ENCODE measurements at regions of chr13 and their contacts with region 1.

Region 1: DNA sequence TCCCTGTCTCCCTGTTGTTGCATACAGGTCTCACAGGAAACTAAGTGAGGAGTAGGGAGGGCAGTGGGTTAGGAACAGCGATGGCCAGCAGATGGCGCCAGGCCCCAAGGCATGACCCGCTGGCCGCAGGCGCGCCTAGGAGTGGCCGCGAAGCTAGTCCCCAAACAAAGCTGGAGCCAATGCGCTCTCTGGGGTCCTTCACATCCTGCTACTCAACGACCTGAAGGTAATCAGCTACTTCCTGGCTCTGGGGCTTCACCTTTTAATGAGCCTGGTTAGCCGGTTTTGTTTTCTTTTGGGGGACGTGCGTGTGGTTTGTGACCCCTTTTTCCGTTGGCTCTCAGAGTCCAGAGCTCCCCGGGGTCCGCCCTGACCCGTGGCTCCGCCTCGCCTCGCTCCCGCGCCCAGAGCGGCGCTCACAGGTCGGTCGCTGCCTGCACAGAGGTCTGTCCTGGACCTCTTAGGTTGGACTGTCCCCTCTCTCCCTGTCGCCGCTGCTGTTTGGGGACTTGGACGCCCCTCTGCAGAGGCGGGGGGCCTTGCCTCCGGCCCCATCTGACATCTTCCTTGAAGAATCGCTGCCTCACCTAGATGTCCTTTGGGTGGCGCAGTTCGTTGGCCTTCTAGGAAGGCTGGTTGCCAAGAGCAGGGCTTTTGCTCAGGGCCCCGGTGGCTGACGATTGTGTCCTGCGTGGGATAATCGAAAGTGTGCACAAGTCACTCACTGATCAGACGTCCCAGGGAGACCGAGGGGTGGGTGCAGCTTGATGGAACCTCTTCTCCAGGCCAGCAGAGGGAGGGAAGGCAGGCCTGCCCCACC is 62.1 kb upstream of the GTF3A start:
- DNase-seq: peak; percentile 95
- H3K4me3 ChIP-seq: peak overlapping the region; percentile 51 to 62 (median 60)
- H3K27ac ChIP-seq: no peak overlapping the region
- H3K4me1 ChIP-seq: peaks cover 10 to 29% (median 20%) of the 10 kb centered on the region in 4 donors
- H3K27me3 ChIP-seq: peaks cover 0 to 18% (median 0%) of the 10 kb centered on the region in 4 donors
- CTCF ChIP-seq: peak; percentile 89 to 97 (median 90)
- EP300 ChIP-seq: no peak
- POLR2A ChIP-seq: no peak

Region 2: GRCh38 chr13:26855921-26856320 is 506.4 kb before region 1 on chr13:
- intact Hi-C with region 1: no loop called
- DNase-seq: no peak
- H3K4me3 ChIP-seq: no peak overlapping the region
- H3K27ac ChIP-seq: no peak overlapping the region
- H3K4me1 ChIP-seq: peaks cover 0 to 15% (median 0%) of the 10 kb centered on the region in 4 donors
- H3K27me3 ChIP-seq: no peaks in the 10 kb centered on the region
- CTCF ChIP-seq: no peak
- EP300 ChIP-seq: no peak
- POLR2A ChIP-seq: no peak

Region 3: GRCh38 chr13:26946684-26947343 is 415.5 kb before region 1 on chr13:
- intact Hi-C with region 1: loop called (anchors 2 kb)
- DNase-seq: no peak
- H3K4me3 ChIP-seq: no peak overlapping the region
- H3K27ac ChIP-seq: no peak overlapping the region
- H3K4me1 ChIP-seq: peaks cover 0 to 5% (median 3%) of the 10 kb centered on the region in 4 donors
- H3K27me3 ChIP-seq: no peaks in the 10 kb centered on the region
- CTCF ChIP-seq: peak; percentile 81 to 88 (median 84)
- EP300 ChIP-seq: no peak
- POLR2A ChIP-seq: no peak

Region 4: DNA sequence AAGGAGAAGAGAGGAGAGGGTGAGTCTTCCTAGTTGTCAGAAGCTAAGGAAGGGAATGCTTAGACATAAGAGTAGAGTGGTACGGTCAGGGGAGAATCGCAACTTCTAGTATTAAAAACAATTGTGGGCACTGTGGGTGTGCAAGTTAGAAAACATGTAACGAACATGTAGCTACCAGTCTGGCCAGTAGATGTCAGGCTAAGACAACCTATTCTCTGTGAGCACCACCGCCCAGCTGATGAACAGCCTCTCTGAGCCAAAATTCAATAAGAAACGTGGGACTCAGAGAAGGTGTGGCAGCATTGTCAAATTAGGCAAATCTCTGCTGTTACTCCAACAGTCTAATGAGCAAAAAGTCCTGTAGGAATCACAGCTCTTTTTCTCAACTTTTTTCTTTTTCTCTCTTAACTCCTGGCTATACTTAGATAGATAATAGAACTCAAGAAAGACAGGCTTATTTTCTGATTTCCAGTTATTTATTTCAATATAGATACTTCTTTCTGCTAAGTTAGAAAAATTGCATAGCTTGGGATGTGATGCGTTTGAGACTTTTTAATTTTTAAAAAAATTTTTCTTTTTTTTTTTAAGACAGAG is 376.9 kb before region 1 on chr13:
- intact Hi-C with region 1: loop called (anchors 1 kb)
- DNase-seq: no peak
- H3K4me3 ChIP-seq: no peak overlapping the region
- H3K27ac ChIP-seq: peak overlapping the region; percentile 82 to 89 (median 89)
- H3K4me1 ChIP-seq: peaks cover 14 to 69% (median 60%) of the 10 kb centered on the region in 4 donors
- H3K27me3 ChIP-seq: no peaks in the 10 kb centered on the region
- CTCF ChIP-seq: peak; percentile 74 to 88 (median 78)
- EP300 ChIP-seq: no peak
- POLR2A ChIP-seq: no peak

Region 5: DNA sequence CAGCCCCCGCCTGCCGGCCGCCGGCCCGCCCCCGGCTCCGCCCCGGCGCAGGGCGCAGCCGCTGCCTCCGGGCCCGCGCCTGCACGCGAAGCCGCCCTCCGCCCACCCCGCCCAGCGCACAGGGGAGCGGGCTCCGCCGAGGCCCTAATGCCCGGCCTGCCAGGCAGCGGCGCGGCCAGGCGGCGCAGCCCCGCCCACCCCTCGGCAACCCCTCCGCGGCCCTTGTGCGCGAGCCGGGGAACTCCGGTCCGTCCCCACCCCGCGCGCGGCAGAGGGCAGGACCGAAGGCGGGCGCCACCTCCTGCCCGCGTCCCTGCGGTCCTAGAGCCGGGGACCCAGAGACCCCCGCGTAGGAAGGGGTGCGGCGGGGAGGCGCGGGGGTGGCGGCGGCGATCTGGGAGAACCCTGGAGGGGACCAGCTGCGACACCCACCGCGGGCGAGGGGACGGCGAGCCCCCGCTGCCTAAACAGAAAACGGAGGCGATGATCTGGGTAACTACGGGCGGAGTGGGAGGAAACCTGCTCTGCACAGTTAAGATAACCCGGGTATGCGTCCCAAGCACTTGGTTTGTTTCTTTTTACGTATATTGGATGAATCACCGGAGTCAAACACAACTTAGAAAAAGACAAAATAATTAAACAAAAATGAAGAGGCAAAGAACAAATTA is 190.3 kb before region 1 on chr13:
- intact Hi-C with region 1: loop called (anchors 10 kb)
- DNase-seq: no peak
- H3K4me3 ChIP-seq: peak overlapping the region; percentile 76 to 94 (median 82)
- H3K27ac ChIP-seq: peak overlapping the region; percentile 92 to 98 (median 97)
- H3K4me1 ChIP-seq: peaks cover 32 to 45% (median 41%) of the 10 kb centered on the region in 4 donors
- H3K27me3 ChIP-seq: no peaks in the 10 kb centered on the region
- CTCF ChIP-seq: peak in 2 of 3 experiments; percentile 46 to 51
- EP300 ChIP-seq: no peak
- POLR2A ChIP-seq: no peak

Region 6: DNA sequence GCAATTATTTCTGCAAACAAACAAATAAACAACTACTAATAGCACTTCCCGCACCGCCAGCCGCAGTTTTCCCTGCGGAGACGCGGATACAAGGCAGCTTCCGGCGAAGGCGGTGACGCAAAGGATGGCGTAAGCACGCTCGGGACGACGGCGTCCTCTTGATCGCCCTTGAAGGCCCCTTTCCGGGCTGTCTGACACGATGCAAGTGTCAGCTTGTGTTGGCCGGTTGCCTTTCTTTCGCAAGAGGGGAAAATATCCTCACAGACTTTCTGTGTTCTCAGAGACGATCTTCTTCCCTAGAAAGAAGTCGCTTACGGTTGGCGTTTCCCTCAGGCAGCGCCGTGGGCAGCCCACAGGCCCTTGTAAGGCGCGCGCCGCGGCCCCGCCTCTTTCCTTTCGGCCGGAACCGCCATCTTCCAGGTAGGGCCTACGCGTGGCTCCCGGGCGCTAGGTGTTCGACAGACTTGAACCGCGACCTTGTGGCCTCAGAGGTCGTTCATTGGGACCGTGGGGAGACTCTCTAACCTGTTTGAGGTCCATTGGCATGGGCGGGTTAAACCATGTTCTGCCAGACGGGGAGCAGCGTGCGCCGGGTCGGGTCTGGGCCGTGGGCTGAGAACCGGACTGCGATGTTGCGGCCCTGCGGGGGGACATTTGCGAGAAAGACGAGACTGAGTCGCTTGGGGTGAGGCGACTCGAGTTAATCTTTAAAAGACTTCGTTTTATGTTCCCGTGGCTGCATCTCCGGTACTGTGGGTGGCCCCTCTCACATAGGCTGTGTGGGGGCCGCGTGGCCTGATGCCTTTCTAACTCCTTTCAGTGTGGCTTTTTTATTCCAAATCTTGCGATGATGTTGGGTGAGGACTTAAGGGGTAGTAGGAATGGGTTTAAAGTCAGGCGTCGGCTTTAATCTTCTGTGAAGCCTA is 110.8 kb before region 1 on chr13 and contains the start of gene RPL21:
- intact Hi-C with region 1: loop called (anchors 5 kb)
- DNase-seq: peak; percentile 99
- H3K4me3 ChIP-seq: peak within 1 kb of the TSS; percentile 75 to 86 (median 80)
- H3K27ac ChIP-seq: peak within 1 kb of the TSS; percentile 90 to 96 (median 95)
- H3K4me1 ChIP-seq: peaks cover 34 to 52% (median 46%) of the 10 kb centered on the region in 4 donors
- H3K27me3 ChIP-seq: no peaks in the 10 kb centered on the region
- CTCF ChIP-seq: no peak
- EP300 ChIP-seq: peak; percentile 83
- POLR2A ChIP-seq: peak; percentile 86
- total RNA-seq, gene RPL21: 432 to 1,374 (median 1,046) TPM

Region 7: GRCh38 chr13:27401210-27401609 is 38.9 kb after region 1 on chr13:
- intact Hi-C with region 1: no loop called
- DNase-seq: no peak
- H3K4me3 ChIP-seq: no peak overlapping the region
- H3K27ac ChIP-seq: no peak overlapping the region
- H3K4me1 ChIP-seq: peaks cover 14 to 25% (median 18%) of the 10 kb centered on the region in 4 donors
- H3K27me3 ChIP-seq: no peaks in the 10 kb centered on the region
- CTCF ChIP-seq: no peak
- EP300 ChIP-seq: no peak
- POLR2A ChIP-seq: no peak

Region 8: GRCh38 chr13:27980280-27980998 is 618.2 kb after region 1 on chr13:
- intact Hi-C with region 1: loop called (anchors 5 kb)
- DNase-seq: no peak
- H3K4me3 ChIP-seq: peak overlapping the region in 1 of 4 donors; percentile 22
- H3K27ac ChIP-seq: no peak overlapping the region
- H3K4me1 ChIP-seq: peaks cover 9 to 44% (median 37%) of the 10 kb centered on the region in 4 donors
- H3K27me3 ChIP-seq: peaks cover 0 to 97% (median 65%) of the 10 kb centered on the region in 4 donors
- CTCF ChIP-seq: no peak
- EP300 ChIP-seq: no peak
- POLR2A ChIP-seq: no peak